GM13977 (cell line): ENCODE measurements at regions of chrX and their contacts with region 1.

Region 1: GRCh38 chrX:151753313-151754041 is 18.9 kb downstream of the CNGA2 start:
- DNase-seq: peak; percentile 65
- CTCF ChIP-seq: peak; percentile 73

Region 2: DNA sequence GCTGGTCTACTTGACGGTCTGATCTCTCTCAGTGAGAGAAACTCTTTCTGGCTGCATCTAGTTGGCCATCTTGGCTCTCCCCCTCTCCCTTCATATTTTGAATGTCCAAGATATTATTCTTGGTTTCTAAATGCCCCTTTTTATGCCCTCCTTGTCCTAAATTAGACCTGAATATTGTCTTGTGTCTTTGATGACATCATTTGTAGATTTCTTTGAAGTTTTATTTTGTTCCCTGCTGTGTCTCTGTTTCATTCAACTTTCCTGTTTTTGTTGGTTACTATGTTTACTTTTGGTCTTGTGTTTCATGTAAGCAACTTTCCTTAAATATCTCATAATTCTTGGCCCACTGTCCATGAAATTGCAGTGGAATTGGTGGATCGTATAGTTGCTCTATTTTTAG is 236.1 kb before region 1 on chrX:
- in situ Hi-C with region 1: no loop called
- DNase-seq: no peak
- CTCF ChIP-seq: no peak

Region 3: DNA sequence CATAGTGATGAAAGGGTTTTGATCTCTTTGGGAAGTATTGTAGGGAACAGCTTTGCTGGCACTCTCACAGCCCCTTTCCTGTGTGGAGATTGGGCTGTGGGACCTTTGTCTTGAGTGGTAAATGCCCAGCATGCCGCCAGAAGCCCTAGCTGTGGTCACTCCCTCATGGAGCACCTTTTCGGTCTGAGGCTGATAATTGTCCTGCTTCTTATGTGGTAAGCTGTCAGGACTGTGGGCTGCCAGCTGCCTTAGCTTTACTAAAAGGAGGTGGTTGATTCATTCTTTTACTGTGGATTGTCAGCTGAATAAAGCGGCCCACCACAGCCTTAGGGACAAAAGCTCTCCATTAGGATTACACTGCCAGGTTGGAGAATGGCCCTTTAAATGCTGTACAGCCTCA is 182.9 kb before region 1 on chrX:
- in situ Hi-C with region 1: no loop called
- DNase-seq: no peak
- CTCF ChIP-seq: no peak

Region 4: DNA sequence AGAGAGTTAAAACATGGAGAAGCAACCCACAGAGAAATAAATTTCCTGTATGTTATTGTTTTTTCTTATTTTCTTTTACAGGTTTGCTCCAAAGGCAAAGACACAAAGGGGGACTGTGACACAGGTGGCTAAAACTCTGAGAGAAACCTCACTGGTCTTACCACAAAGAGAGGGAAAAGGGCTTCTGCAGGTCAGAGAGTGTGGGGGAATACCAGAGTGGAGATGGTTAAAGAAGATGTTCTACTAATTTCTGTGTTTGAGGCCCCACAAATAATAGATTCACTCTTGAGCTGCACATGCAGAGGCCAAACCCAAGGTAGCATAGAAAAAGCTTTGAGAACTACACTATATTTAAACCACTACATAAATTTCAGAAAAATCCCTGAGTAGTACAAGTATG is 546.3 kb after region 1 on chrX:
- in situ Hi-C with region 1: no loop called
- DNase-seq: no peak
- CTCF ChIP-seq: no peak

Region 5: GRCh38 chrX:152632445-152633097 is 879.1 kb after region 1 on chrX:
- in situ Hi-C with region 1: loop called (anchors 25 kb)
- DNase-seq: no peak
- CTCF ChIP-seq: peak; percentile 85

Region 6: DNA sequence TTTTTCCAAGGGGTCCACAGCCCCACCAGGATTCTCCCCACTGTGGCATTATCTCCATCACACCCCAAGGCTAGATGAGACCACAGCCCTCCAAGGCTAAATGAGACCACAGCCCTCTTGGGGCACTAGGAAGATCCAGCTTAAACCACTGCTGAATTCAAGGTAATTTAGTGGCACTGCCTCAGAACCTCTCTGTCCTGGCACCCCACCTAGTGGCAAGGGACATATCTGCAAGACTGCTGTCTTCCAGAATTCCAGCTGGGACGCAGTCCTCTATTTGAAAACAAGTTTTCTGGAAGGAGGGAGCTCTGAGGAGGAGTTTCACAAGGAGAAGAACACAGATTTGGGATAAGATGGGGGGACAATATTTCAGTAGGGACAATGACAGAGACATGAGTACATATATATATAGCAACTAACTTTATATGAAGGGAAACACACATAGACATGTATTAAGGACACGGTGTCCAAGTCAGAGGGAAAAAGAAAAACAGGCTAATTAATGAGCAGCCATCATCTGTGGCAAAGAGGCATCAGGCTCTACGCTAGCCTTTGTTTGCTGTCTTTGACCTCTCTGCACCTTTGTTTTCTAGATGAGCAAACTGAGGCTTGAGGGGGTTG is 1067.8 kb after region 1 on chrX:
- in situ Hi-C with region 1: loop called (anchors 25 kb)
- DNase-seq: no peak
- CTCF ChIP-seq: peak; percentile 58